Activated B cell treated with CpG ODN at 0.5 μM for 24 hours (primary cell): ENCODE measurements at regions of chr19 and their contacts with region 1.

Region 1: DNA sequence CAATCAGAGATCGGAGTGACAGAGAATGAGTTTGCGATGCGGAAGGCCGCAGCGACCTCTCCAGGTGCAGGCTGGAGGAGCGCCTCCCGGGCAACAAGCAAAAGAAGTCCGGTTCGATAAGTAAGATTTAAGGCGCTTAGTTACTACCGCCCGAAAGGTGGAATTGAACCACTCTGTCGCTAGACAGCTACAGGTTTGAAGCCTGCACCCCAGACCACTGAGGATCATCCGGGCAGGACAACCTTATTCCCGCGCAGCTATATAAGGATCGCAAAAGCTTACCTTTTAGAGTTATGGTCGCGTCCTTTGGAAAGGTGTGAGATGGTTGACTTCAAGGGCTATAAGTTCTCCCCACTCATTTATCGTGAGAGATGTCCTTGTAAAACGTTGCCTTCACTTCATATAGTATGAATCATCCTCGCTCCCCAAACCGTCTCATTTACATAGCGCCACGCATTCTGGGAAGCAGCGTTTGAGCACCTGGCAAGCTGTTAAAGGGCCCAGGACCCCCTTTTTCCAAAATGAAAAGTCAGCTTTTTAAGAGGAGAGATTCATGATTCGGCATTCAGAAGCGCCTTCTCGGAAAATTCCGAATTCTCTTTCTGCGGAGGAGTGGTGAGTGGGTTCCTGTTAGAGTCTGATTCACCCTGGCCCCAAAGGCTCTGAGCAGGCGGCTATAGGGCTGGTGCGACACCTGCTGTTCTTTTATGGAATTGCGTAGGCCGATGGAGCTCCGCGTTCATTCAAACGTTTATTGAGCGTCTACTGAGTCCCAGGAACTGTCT is 10.8 kb downstream of the FOSB start:
- DNase-seq: peak; percentile 79
- ATAC-seq: peak; percentile 81
- H3K4me3 Mint-ChIP-seq: peak overlapping the region; percentile 89
- H3K27ac Mint-ChIP-seq: peak overlapping the region; percentile 97
- H3K4me1 Mint-ChIP-seq: peaks cover 21% of the 10 kb centered on the region
- H3K27me3 Mint-ChIP-seq: peaks cover 14% of the 10 kb centered on the region
- CTCF ChIP-seq: peak; percentile 72

Region 2: GRCh38 chr19:45370410-45371204 is 108.0 kb before region 1 on chr19 and contains the start of gene ERCC2:
- CTCF ChIA-PET with region 1: no interaction called
- POLR2A ChIA-PET with region 1: no interaction called
- intact Hi-C with region 1: loop called (anchors 1 kb)
- DNase-seq: peak; percentile 98
- ATAC-seq: peak; percentile 97
- H3K4me3 Mint-ChIP-seq: peak within 1 kb of the TSS; percentile 95
- H3K27ac Mint-ChIP-seq: peak within 1 kb of the TSS; percentile 99
- H3K4me1 Mint-ChIP-seq: peaks cover 14% of the 10 kb centered on the region
- H3K27me3 Mint-ChIP-seq: no peaks in the 10 kb centered on the region
- CTCF ChIP-seq: no peak
- total RNA-seq, gene ERCC2: 29.8 and 31.5 TPM in 2 replicates

Region 3: GRCh38 chr19:45558399-45558878 is 79.8 kb after region 1 on chr19:
- CTCF ChIA-PET with region 1: interaction called, 13 read pairs
- POLR2A ChIA-PET with region 1: no interaction called
- intact Hi-C with region 1: no loop called
- DNase-seq: peak; percentile 26
- ATAC-seq: peak; percentile 99
- H3K4me3 Mint-ChIP-seq: no peak overlapping the region
- H3K27ac Mint-ChIP-seq: no peak overlapping the region
- H3K4me1 Mint-ChIP-seq: peaks cover 25% of the 10 kb centered on the region
- H3K27me3 Mint-ChIP-seq: no peaks in the 10 kb centered on the region
- CTCF ChIP-seq: no peak

Region 4: DNA sequence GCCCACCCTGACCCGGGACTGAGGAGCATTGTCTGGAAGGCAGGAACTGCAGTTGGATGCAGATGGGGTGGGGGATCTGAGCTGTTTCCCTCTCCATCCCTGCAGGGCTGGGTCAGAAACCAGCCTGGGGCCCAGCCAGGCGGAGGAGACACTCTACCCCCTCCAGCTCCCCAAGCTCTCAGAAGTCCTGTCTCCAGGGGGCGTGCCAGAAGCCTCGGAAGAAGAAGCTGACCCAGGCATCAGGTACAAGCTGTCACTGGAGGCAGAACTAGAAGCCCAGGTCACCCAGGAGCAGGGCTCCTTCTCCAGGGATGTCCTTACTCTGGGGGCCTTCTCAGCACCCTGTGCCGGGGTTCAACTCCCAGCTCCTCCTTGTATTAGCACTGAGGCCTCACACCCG is 274.9 kb after region 1 on chr19:
- CTCF ChIA-PET with region 1: no interaction called
- POLR2A ChIA-PET with region 1: no interaction called
- intact Hi-C with region 1: no loop called
- DNase-seq: no peak
- ATAC-seq: no peak
- H3K4me3 Mint-ChIP-seq: no peak overlapping the region
- H3K27ac Mint-ChIP-seq: no peak overlapping the region
- H3K4me1 Mint-ChIP-seq: no peaks in the 10 kb centered on the region
- H3K27me3 Mint-ChIP-seq: peaks cover 2% of the 10 kb centered on the region
- CTCF ChIP-seq: no peak

Region 5: GRCh38 chr19:45886427-45887199 is 408.0 kb after region 1 on chr19:
- CTCF ChIA-PET with region 1: no interaction called
- POLR2A ChIA-PET with region 1: no interaction called
- intact Hi-C with region 1: no loop called
- DNase-seq: peak; percentile 86
- ATAC-seq: peak; percentile 65
- H3K4me3 Mint-ChIP-seq: peak overlapping the region; percentile 92
- H3K27ac Mint-ChIP-seq: peak overlapping the region; percentile 94
- H3K4me1 Mint-ChIP-seq: peaks cover 30% of the 10 kb centered on the region
- H3K27me3 Mint-ChIP-seq: no peaks in the 10 kb centered on the region
- CTCF ChIP-seq: no peak